Panc1 (cell line): ENCODE measurements at regions of chr10 and their contacts with region 1.

Region 1: DNA sequence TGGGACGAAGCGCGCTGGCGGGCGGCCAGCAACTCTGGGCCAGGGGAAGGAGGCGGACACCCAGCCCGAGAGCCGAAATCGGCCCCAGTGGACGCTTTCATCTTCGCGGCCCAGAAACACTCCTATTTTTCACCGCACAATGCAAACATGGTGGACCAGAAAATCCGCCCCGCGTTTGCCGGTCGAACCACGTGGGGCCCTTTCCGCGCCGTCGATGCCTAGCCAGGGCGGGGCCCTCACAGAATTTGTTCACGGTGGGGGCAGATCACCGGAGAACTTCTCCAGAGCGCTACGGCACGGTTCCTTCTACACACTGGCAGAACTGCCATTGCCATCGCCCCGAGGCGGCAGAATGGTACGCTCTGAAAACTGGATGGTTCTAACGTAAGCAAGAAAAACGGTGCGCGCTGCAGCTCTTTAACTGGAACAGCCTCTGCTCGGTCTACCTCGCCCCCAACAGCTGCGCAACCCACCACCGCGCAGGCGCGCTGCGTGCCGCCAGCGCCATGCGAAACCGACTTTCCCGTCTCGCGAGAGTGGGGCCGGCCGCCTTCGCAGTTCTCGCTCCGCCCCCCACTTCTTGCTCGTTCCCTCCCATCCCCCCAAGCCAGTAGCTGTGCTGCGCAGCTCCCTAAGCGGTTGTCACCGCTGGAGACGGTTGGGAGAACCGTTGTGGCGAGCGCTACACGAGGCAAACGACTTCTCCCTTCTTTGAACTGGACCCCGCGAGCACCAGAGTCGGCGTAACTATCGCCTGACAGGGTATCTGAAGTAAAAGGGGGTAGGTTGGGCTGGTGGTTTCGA is at the start of gene HNRNPH3:
- DNase-seq: peak; percentile 89
- ATAC-seq: peak; percentile 85
- H3K4me3 ChIP-seq: peak within 1 kb of the TSS; percentile 65 to 90
- H3K27ac ChIP-seq: peak within 1 kb of the TSS; percentile 100
- H3K4me1 ChIP-seq: peaks cover 51% of the 10 kb centered on the region
- H3K27me3 ChIP-seq: no peaks in the 10 kb centered on the region
- CTCF ChIP-seq: no peak
- total RNA-seq, gene HNRNPH3: 143 TPM

Region 2: GRCh38 chr10:68052463-68052862 is 279.2 kb before region 1 on chr10:
- CTCF ChIA-PET with region 1: no interaction called
- POLR2A ChIA-PET with region 1: no interaction called
- in situ Hi-C with region 1: no loop called
- intact Hi-C with region 1: no loop called
- DNase-seq: no peak
- ATAC-seq: no peak
- H3K4me3 ChIP-seq: no peak overlapping the region
- H3K27ac ChIP-seq: no peak overlapping the region
- H3K4me1 ChIP-seq: peaks cover 21% of the 10 kb centered on the region
- H3K27me3 ChIP-seq: no peaks in the 10 kb centered on the region
- CTCF ChIP-seq: no peak

Region 3: GRCh38 chr10:68560943-68561864 is 229.5 kb after region 1 on chr10:
- CTCF ChIA-PET with region 1: no interaction called
- POLR2A ChIA-PET with region 1: interaction called, 10 read pairs
- in situ Hi-C with region 1: no loop called
- intact Hi-C with region 1: no loop called
- DNase-seq: no peak
- ATAC-seq: peak; percentile 72
- H3K4me3 ChIP-seq: peak overlapping the region; percentile 62 to 64
- H3K27ac ChIP-seq: peak overlapping the region; percentile 82
- H3K4me1 ChIP-seq: peaks cover 13% of the 10 kb centered on the region
- H3K27me3 ChIP-seq: no peaks in the 10 kb centered on the region
- CTCF ChIP-seq: no peak

Region 4: DNA sequence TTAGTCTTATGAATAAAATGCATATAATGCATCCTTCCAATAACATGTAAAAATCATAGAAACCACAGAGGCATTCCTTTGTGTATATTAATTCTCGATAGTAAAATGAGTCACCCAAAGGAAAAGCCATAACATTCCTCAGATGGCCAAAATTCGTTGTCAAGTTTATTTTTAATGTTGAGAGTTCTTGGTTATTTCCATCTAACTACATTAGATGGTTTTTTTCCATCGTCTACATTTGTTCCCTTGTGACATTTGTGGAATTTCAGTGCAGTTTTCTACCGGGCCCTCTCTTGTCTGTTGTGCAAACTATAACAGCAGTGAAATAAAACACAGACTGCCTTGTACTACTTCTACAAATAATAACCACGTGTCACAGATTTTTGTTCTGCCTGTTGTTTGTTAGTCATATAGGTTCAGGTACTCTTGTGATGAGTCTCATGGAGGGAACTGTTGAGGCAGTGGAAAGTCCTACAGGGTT is 334.7 kb after region 1 on chr10:
- CTCF ChIA-PET with region 1: no interaction called
- POLR2A ChIA-PET with region 1: interaction called, 10 read pairs
- in situ Hi-C with region 1: no loop called
- intact Hi-C with region 1: no loop called
- DNase-seq: peak; percentile 33
- ATAC-seq: peak; percentile 89
- H3K4me3 ChIP-seq: no peak overlapping the region
- H3K27ac ChIP-seq: peak overlapping the region; percentile 36; the same call in 1 of the 2 replicates
- H3K4me1 ChIP-seq: peaks cover 9% of the 10 kb centered on the region; the same call in 1 of the 2 replicates
- H3K27me3 ChIP-seq: no peaks in the 10 kb centered on the region
- CTCF ChIP-seq: no peak